CD4-positive, alpha-beta memory T cell (primary cell): ENCODE measurements at regions of chr11 and their contacts with region 1.

Region 1: GRCh38 chr11:75142714-75143419 is 8.0 kb upstream of the SLCO2B1 start:
- DNase-seq: peak; percentile 44 to 88 (median 57)
- H3K4me3 ChIP-seq: no peak overlapping the region
- H3K4me3 Mint-ChIP-seq: peak overlapping the region in 7 of 8 donors; percentile 58 to 75 (median 73)
- H3K27ac ChIP-seq: peak overlapping the region; percentile 22
- H3K27ac Mint-ChIP-seq: peak overlapping the region; percentile 45 to 93 (median 89)
- H3K4me1 ChIP-seq: peaks cover 37% of the 10 kb centered on the region
- H3K4me1 Mint-ChIP-seq: peaks cover 25 to 40% (median 34%) of the 10 kb centered on the region in 4 donors
- H3K27me3 ChIP-seq: no peaks in the 10 kb centered on the region
- H3K27me3 Mint-ChIP-seq: peaks cover 0 to 1% of the 10 kb centered on the region in 2 donors

Region 2: GRCh38 chr11:74929431-74930363 is 213.2 kb before region 1 on chr11:
- CTCF ChIA-PET with region 1: interaction called, 12 read pairs
- POLR2A ChIA-PET with region 1: no interaction called
- intact Hi-C with region 1: loop called (anchors 1 kb)
- DNase-seq: peak; percentile 59 to 74 (median 63)
- H3K4me3 ChIP-seq: no peak overlapping the region
- H3K4me3 Mint-ChIP-seq: no peak overlapping the region
- H3K27ac ChIP-seq: no peak overlapping the region
- H3K27ac Mint-ChIP-seq: no peak overlapping the region
- H3K4me1 ChIP-seq: no peaks in the 10 kb centered on the region
- H3K4me1 Mint-ChIP-seq: peaks cover 0 to 6% (median 0%) of the 10 kb centered on the region in 4 donors
- H3K27me3 ChIP-seq: no peaks in the 10 kb centered on the region
- H3K27me3 Mint-ChIP-seq: no peaks in the 10 kb centered on the region

Region 3: GRCh38 chr11:75170521-75171216 is 27.8 kb after region 1 on chr11:
- CTCF ChIA-PET with region 1: interaction called, 11 read pairs
- POLR2A ChIA-PET with region 1: no interaction called
- intact Hi-C with region 1: no loop called
- DNase-seq: no peak
- H3K4me3 ChIP-seq: no peak overlapping the region
- H3K4me3 Mint-ChIP-seq: no peak overlapping the region
- H3K27ac ChIP-seq: no peak overlapping the region
- H3K27ac Mint-ChIP-seq: no peak overlapping the region
- H3K4me1 ChIP-seq: peaks cover 13% of the 10 kb centered on the region
- H3K4me1 Mint-ChIP-seq: peaks cover 11 to 18% (median 13%) of the 10 kb centered on the region in 4 donors
- H3K27me3 ChIP-seq: no peaks in the 10 kb centered on the region
- H3K27me3 Mint-ChIP-seq: peaks cover 0 to 2% of the 10 kb centered on the region in 2 donors

Region 4: GRCh38 chr11:75204685-75205563 is 62.1 kb after region 1 on chr11:
- CTCF ChIA-PET with region 1: interaction called, 560 read pairs
- POLR2A ChIA-PET with region 1: interaction called, 15 read pairs
- intact Hi-C with region 1: no loop called
- DNase-seq: peak; percentile 61 to 75 (median 68)
- H3K4me3 ChIP-seq: no peak overlapping the region
- H3K4me3 Mint-ChIP-seq: no peak overlapping the region
- H3K27ac ChIP-seq: no peak overlapping the region
- H3K27ac Mint-ChIP-seq: no peak overlapping the region
- H3K4me1 ChIP-seq: no peaks in the 10 kb centered on the region
- H3K4me1 Mint-ChIP-seq: no peaks in the 10 kb centered on the region
- H3K27me3 ChIP-seq: no peaks in the 10 kb centered on the region
- H3K27me3 Mint-ChIP-seq: peaks cover 3 to 7% of the 10 kb centered on the region in 2 donors

Region 5: DNA sequence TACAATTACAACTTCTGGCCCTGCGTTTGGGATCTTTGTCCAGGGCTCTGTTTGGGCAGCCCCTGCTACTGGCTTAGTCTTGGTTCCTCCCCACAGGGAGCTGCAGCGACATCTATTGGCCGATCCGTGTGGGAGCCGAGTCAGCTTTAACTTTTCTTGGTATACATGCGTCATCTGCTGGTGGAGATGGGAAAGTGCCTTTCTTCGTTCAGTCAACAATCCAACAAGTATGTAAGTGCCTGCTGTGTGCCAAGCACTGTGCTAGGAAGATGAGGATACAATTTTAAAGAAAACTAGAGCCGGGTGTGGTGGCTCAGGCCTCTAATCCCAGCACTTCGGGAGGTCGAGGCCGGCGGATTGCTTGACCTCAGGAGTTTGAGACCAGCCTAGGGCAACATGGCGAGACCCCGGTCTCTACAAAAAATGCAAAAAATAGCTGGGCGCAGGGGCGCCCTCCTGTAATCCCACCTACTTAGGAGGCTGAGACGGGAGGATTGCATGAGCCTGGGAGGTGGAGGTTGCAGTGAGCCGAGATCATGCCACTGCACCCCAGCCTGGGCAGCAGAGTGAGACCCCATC is 105.9 kb after region 1 on chr11:
- CTCF ChIA-PET with region 1: interaction called, 567 read pairs
- POLR2A ChIA-PET with region 1: interaction called, 17 read pairs
- intact Hi-C with region 1: loop called (anchors 1 kb)
- DNase-seq: peak; percentile 81 to 87 (median 84)
- H3K4me3 ChIP-seq: no peak overlapping the region
- H3K4me3 Mint-ChIP-seq: no peak overlapping the region
- H3K27ac ChIP-seq: no peak overlapping the region
- H3K27ac Mint-ChIP-seq: peak overlapping the region in 1 of 7 donors; percentile 47
- H3K4me1 ChIP-seq: no peaks in the 10 kb centered on the region
- H3K4me1 Mint-ChIP-seq: peaks cover 0 to 3% (median 1%) of the 10 kb centered on the region in 4 donors
- H3K27me3 ChIP-seq: no peaks in the 10 kb centered on the region
- H3K27me3 Mint-ChIP-seq: peaks cover 10 to 14% of the 10 kb centered on the region in 2 donors